Naive thymus-derived CD8-positive, alpha-beta T cell (primary cell): ENCODE measurements at regions of chr12 and their contacts with region 1.

Region 1: DNA sequence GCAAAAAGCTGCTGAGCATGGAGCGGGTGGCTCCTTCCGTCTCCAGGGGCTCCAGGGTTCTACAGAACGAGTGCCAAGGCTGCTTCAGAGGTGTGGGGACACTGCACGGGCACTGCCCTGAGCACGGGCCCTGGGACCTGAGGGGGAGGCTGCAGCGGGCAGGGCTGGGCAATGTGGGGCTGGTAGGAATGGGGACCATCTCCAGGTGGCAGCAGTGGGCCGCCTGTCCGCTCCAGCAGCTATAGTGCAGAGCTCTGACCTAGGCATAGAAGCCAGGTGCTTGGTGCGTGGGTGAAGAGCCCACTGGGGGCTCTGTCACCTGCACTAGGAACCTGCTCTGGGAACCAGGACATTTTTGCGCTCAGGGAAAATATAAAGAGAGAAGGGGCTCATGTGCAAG is 22.3 kb downstream of the HDAC7 start:
- DNase-seq: peak in 8 of 10 donors; percentile 41 to 76 (median 58)
- ATAC-seq: peak; percentile 88 to 90
- H3K4me3 Mint-ChIP-seq: peak overlapping the region in 7 of 10 donors; percentile 44 to 81 (median 68)
- H3K27ac Mint-ChIP-seq: peak overlapping the region; percentile 51 to 95 (median 87)
- H3K4me1 Mint-ChIP-seq: peaks cover 26 to 51% (median 42%) of the 10 kb centered on the region in 4 donors
- H3K27me3 Mint-ChIP-seq: no peaks in the 10 kb centered on the region

Region 2: DNA sequence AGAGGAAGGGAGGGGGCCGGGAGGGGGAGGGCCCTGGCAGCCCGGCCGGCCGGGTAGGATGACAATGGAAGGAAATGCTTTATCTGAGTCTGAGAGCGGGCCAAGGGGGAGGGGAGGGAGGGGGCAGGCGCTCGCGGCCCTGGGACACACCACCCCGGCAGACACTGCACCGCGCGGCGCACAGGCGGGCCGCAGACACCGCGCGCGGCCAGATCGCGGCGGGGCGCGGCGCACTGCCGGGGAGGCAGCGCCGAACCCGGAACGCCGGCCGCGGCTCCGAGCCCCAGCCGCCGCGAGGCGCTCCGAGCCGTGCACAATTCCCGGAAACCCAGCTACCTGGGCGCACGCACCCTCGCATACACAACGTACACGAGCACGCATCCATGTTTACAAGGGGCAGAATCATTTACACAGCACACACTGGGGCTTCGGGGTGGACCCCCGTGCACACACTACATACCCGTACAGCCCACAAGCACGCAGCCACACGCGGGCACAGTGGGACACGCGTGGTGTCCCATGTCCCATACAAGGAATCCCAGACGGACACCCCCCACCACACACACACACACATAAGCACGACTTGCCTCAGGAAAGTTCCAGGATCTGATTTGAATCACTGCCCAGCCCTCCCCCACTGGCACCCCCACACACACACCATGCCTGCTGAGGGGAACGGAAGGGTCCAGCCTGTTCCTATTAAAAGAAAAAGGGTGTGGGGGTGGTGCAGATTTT is 22.6 kb after region 1 on chr12 and contains the start of gene HDAC7:
- POLR2A ChIA-PET with region 1: interaction called, 66 read pairs
- DNase-seq: peak; percentile 47 to 84 (median 62)
- ATAC-seq: peak; percentile 64 to 66
- H3K4me3 Mint-ChIP-seq: peak within 1 kb of the TSS; percentile 90 to 99 (median 95)
- H3K27ac Mint-ChIP-seq: peak within 1 kb of the TSS; percentile 94 to 99 (median 98)
- H3K4me1 Mint-ChIP-seq: peaks cover 59 to 90% (median 82%) of the 10 kb centered on the region in 4 donors
- H3K27me3 Mint-ChIP-seq: no peaks in the 10 kb centered on the region
- polyA plus RNA-seq, gene HDAC7: 10.2 to 30.5 (median 14.3) TPM

Region 3: DNA sequence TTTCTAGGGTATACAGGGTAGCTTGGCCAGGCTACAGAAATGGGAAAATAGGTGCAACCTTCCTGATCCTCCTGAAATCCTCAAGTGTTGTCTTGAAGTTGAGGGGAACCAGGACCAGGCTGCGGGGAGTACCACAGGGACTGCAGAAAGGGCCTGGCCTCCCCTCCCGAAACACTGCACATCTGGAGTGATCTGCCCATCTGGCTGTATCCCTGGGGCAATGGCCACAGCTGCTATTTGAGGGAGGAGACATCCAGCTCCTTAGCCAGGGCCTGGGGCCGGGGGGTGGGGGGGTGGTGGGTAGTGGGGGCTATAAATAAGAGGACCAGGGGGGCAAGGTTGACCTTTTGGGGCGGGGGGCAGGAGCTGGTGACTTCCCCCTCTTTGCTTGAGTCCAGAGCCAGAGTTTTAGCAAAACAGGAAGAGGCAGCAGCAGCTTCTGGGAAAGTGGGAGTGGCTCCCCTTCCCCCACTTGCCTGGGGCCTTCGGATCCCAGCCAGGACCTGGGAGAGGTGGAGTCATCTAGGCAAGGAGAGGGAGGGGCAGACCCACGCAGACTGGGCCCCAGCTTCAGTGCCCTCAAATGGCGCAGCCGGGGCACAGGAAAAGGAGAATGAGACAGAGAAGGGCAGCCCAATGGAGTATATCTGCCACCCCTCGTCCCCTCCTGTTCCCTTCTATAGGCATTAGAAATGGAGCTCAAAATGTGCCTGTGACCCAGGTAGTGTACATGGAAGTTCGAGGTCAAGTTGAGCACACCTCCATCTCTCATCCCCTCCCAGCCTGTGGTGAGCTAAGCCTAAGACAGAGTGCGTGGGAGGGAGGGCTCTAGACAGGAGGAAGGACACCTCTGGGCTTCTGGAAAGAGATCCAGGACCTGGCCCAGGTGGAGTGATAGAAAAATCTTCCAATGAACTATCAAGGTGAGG is 31.4 kb after region 1 on chr12:
- POLR2A ChIA-PET with region 1: interaction called, 514 read pairs
- DNase-seq: no peak
- ATAC-seq: no peak
- H3K4me3 Mint-ChIP-seq: peak overlapping the region in 6 of 10 donors; percentile 34 to 72 (median 43)
- H3K27ac Mint-ChIP-seq: peak overlapping the region; percentile 14 to 92 (median 75)
- H3K4me1 Mint-ChIP-seq: peaks cover 53 to 96% (median 91%) of the 10 kb centered on the region in 4 donors
- H3K27me3 Mint-ChIP-seq: no peaks in the 10 kb centered on the region